GM12878 (cell line): ENCODE measurements at regions of chr14 and their contacts with region 1.

Region 1: GRCh38 chr14:73503648-73504047 is 12.9 kb downstream of the RIOX1 start:
- DNase-seq: peak; percentile 27
- ATAC-seq: peak; percentile 59
- H3K4me3 ChIP-seq: no peak overlapping the region
- H3K27ac ChIP-seq: no peak overlapping the region
- H3K4me1 ChIP-seq: peaks cover 5% of the 10 kb centered on the region
- H3K27me3 ChIP-seq: no peaks in the 10 kb centered on the region
- CTCF ChIP-seq: no peak
- EP300 ChIP-seq: no peak
- POLR2A ChIP-seq: no peak
- RAD21 ChIP-seq: no peak

Region 2: GRCh38 chr14:73173092-73173735 is 330.4 kb before region 1 on chr14:
- CTCF ChIA-PET with region 1: interaction called, 14 read pairs
- POLR2A ChIA-PET with region 1: no interaction called
- RAD21 ChIA-PET with region 1: interaction called, 3 read pairs
- SMC1A ChIA-PET with region 1: interaction called, 3 read pairs
- in situ Hi-C with region 1: no loop called
- intact Hi-C with region 1: no loop called
- DNase-seq: no peak
- ATAC-seq: peak; percentile 60
- H3K4me3 ChIP-seq: no peak overlapping the region
- H3K27ac ChIP-seq: no peak overlapping the region
- H3K4me1 ChIP-seq: no peaks in the 10 kb centered on the region
- H3K27me3 ChIP-seq: no peaks in the 10 kb centered on the region
- CTCF ChIP-seq: peak; percentile 19 to 62 (median 36); a peak in 4 of 6 replicates
- EP300 ChIP-seq: no peak
- POLR2A ChIP-seq: no peak
- RAD21 ChIP-seq: peak; percentile 68

Region 3: GRCh38 chr14:73209953-73210352 is 293.7 kb before region 1 on chr14:
- CTCF ChIA-PET with region 1: no interaction called
- POLR2A ChIA-PET with region 1: no interaction called
- RAD21 ChIA-PET with region 1: no interaction called
- SMC1A ChIA-PET with region 1: no interaction called
- in situ Hi-C with region 1: no loop called
- intact Hi-C with region 1: no loop called
- DNase-seq: no peak
- ATAC-seq: no peak
- H3K4me3 ChIP-seq: no peak overlapping the region
- H3K27ac ChIP-seq: no peak overlapping the region
- H3K4me1 ChIP-seq: no peaks in the 10 kb centered on the region
- H3K27me3 ChIP-seq: no peaks in the 10 kb centered on the region
- CTCF ChIP-seq: no peak
- EP300 ChIP-seq: no peak
- POLR2A ChIP-seq: no peak
- RAD21 ChIP-seq: no peak

Region 4: DNA sequence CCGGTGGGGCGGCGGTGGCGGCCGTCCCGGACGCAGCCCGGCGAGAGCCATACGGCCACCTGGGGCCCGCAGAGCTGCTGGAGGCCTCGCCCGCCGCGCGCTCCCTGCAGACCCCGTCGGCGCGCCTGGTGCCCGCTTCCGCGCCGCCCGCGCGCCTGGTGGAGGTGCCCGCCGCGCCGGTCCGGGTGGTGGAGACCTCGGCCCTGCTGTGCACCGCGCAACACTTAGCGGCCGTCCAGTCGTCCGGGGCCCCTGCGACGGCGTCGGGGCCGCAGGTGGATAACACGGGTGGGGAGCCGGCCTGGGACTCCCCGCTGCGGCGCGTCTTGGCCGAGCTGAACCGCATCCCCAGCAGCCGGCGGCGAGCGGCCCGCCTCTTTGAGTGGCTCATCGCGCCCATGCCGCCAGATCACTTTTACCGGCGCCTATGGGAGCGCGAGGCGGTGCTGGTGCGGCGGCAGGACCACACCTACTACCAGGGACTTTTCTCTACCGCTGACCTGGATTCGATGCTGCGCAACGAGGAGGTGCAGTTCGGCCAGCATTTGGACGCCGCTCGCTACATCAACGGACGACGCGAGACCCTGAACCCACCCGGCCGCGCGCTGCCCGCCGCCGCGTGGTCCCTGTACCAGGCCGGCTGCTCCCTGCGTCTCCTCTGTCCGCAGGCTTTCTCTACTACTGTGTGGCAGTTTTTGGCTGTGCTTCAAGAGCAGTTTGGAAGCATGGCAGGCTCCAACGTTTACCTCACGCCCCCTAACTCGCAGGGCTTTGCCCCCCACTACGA is 12.2 kb before region 1 on chr14:
- CTCF ChIA-PET with region 1: interaction called, 20 read pairs
- POLR2A ChIA-PET with region 1: interaction called, 7 read pairs
- RAD21 ChIA-PET with region 1: interaction called, 15 read pairs
- SMC1A ChIA-PET with region 1: interaction called, 16 read pairs
- in situ Hi-C with region 1: no loop called
- intact Hi-C with region 1: no loop called
- DNase-seq: no peak
- ATAC-seq: peak; percentile 87
- H3K4me3 ChIP-seq: peak overlapping the region; percentile 80
- H3K27ac ChIP-seq: peak overlapping the region; percentile 72
- H3K4me1 ChIP-seq: peaks cover 17% of the 10 kb centered on the region
- H3K27me3 ChIP-seq: no peaks in the 10 kb centered on the region
- CTCF ChIP-seq: no peak
- EP300 ChIP-seq: no peak
- POLR2A ChIP-seq: no peak
- RAD21 ChIP-seq: no peak

Region 5: DNA sequence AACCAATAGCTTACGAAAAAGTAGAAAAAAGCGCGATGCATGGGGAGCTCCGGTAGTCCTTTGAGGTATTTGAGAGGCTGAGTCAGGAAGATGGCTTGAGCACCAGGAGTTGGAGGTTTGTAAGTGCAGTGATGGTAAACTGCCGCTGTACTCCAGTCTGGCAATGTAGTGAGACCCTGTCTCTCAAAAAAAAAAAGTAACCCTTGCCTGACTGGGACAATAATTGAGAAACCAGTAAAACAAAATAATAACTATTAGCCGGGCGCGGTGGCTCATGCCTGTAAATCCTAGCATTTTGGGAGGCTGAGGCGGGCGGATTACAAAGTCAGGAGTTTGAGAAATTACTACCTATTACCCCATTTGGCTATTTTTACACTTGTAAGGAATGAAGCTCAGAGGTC is 64.7 kb after region 1 on chr14:
- CTCF ChIA-PET with region 1: interaction called, 114 read pairs
- POLR2A ChIA-PET with region 1: interaction called, 3 read pairs
- RAD21 ChIA-PET with region 1: interaction called, 78 read pairs
- SMC1A ChIA-PET with region 1: interaction called, 22 read pairs
- in situ Hi-C with region 1: no loop called
- intact Hi-C with region 1: no loop called
- DNase-seq: no peak
- ATAC-seq: no peak
- H3K4me3 ChIP-seq: peak overlapping the region; percentile 60
- H3K27ac ChIP-seq: peak overlapping the region; percentile 68
- H3K4me1 ChIP-seq: peaks cover 7% of the 10 kb centered on the region
- H3K27me3 ChIP-seq: no peaks in the 10 kb centered on the region
- CTCF ChIP-seq: no peak
- EP300 ChIP-seq: no peak
- POLR2A ChIP-seq: no peak
- RAD21 ChIP-seq: no peak

Region 6: GRCh38 chr14:73633116-73634010 is 129.7 kb after region 1 on chr14:
- CTCF ChIA-PET with region 1: interaction called, 220 read pairs
- POLR2A ChIA-PET with region 1: interaction called, 5 read pairs
- RAD21 ChIA-PET with region 1: interaction called, 68 read pairs
- SMC1A ChIA-PET with region 1: interaction called, 54 read pairs
- in situ Hi-C with region 1: loop called (anchors 5 kb)
- intact Hi-C with region 1: loop called (anchors 1 kb)
- DNase-seq: peak; percentile 48
- ATAC-seq: peak; percentile 94
- H3K4me3 ChIP-seq: peak overlapping the region; percentile 65
- H3K27ac ChIP-seq: no peak overlapping the region
- H3K4me1 ChIP-seq: peaks cover 8% of the 10 kb centered on the region
- H3K27me3 ChIP-seq: peaks cover 0 to 3% of the 10 kb centered on the region in 2 experiments; a peak in 1 of 4 replicates
- CTCF ChIP-seq: peak; percentile 78 to 93 (median 83); a peak in 5 of 6 replicates
- EP300 ChIP-seq: no peak
- POLR2A ChIP-seq: no peak
- RAD21 ChIP-seq: peak; percentile 96

Region 7: GRCh38 chr14:73862480-73862879 is 358.8 kb after region 1 on chr14:
- CTCF ChIA-PET with region 1: no interaction called
- POLR2A ChIA-PET with region 1: no interaction called
- RAD21 ChIA-PET with region 1: no interaction called
- SMC1A ChIA-PET with region 1: no interaction called
- in situ Hi-C with region 1: no loop called
- intact Hi-C with region 1: loop called (anchors 5 kb)
- DNase-seq: no peak
- ATAC-seq: no peak
- H3K4me3 ChIP-seq: no peak overlapping the region
- H3K27ac ChIP-seq: no peak overlapping the region
- H3K4me1 ChIP-seq: no peaks in the 10 kb centered on the region
- H3K27me3 ChIP-seq: no peaks in the 10 kb centered on the region
- CTCF ChIP-seq: no peak
- EP300 ChIP-seq: no peak
- POLR2A ChIP-seq: no peak
- RAD21 ChIP-seq: no peak